ENCODE measurements at regions of chr7 and their contacts with region 1.

Region 1: GRCh38 chr7:82729172-82730030 is 285.8 kb upstream of the CACNA2D1 start:
- DNase-seq: peak in 1 of 2 donors; percentile 42
- ATAC-seq: no peak
- H3K4me3 ChIP-seq: no peak overlapping the region
- H3K4me3 Mint-ChIP-seq: no peak overlapping the region
- H3K27ac ChIP-seq: no peak overlapping the region
- H3K27ac Mint-ChIP-seq: no peak overlapping the region
- H3K4me1 ChIP-seq: no peaks in the 10 kb centered on the region
- H3K4me1 Mint-ChIP-seq: peaks cover 0 to 4% of the 10 kb centered on the region in 2 donors
- H3K27me3 ChIP-seq: no peaks in the 10 kb centered on the region
- H3K27me3 Mint-ChIP-seq: no peaks in the 10 kb centered on the region
- CTCF ChIP-seq: peak; percentile 64

Region 2: DNA sequence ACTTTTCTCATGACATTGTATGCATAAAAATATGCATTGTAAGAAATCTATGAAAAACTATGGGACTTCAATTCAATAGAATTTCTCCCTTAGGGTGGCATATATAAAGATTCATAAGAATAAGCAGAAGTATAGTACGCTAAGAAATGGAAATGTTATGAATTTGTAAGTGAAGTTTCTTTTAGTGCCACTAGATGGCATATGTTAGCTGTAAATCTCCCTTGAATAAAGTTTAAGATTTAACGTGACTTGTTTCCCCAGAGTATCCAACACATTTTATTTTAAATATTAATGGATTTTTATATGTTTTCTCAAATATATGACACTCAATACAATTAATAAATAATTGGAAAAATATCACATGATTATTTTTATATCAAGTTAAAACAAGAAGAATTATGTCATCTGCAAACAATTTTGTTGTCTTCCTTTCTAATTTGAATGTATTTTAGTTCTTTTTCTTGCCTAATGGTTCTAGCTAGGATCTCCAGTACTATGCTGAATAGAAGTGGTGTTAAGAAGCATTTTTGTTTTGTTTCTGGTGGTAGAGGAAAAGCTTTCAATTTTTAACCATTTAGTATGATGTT is 1246.7 kb before region 1 on chr7:
- intact Hi-C with region 1: loop called (anchors 5 kb)
- DNase-seq: peak in 1 of 2 donors; percentile 17
- ATAC-seq: no peak
- H3K4me3 ChIP-seq: no peak overlapping the region
- H3K4me3 Mint-ChIP-seq: no peak overlapping the region
- H3K27ac ChIP-seq: no peak overlapping the region
- H3K27ac Mint-ChIP-seq: no peak overlapping the region
- H3K4me1 ChIP-seq: no peaks in the 10 kb centered on the region
- H3K4me1 Mint-ChIP-seq: no peaks in the 10 kb centered on the region
- H3K27me3 ChIP-seq: no peaks in the 10 kb centered on the region
- H3K27me3 Mint-ChIP-seq: no peaks in the 10 kb centered on the region
- CTCF ChIP-seq: peak; percentile 65

Region 3: DNA sequence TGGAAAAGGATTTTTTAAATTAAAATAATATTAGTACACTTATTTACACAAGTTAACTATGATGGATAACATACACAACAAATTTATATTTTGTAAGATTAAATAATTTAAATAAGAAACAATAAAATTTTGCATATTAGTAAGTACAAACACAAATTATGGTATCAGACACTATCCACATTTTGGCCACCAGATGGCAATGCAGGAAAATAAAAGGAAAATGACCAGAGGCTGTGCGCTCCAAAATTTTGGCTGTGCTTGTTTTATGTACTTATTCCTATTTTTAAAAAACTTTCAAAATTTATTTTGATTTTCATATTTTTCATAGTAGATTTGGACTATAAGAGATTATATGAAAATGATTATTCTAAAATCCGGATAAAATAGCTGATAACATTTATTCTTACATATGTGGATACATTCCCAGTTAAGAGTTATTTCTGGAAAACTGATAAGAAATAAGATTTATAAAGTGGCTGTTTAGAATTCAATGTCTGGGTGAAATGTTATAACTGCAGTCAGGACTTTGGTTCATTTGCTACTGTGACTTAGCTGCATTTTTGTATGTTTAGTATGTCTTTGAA is 684.8 kb before region 1 on chr7:
- intact Hi-C with region 1: loop called (anchors 5 kb)
- DNase-seq: peak in 1 of 2 donors; percentile 32
- ATAC-seq: no peak
- H3K4me3 ChIP-seq: no peak overlapping the region
- H3K4me3 Mint-ChIP-seq: no peak overlapping the region
- H3K27ac ChIP-seq: no peak overlapping the region
- H3K27ac Mint-ChIP-seq: no peak overlapping the region
- H3K4me1 ChIP-seq: no peaks in the 10 kb centered on the region
- H3K4me1 Mint-ChIP-seq: no peaks in the 10 kb centered on the region
- H3K27me3 ChIP-seq: no peaks in the 10 kb centered on the region
- H3K27me3 Mint-ChIP-seq: no peaks in the 10 kb centered on the region
- CTCF ChIP-seq: no peak

Region 4: DNA sequence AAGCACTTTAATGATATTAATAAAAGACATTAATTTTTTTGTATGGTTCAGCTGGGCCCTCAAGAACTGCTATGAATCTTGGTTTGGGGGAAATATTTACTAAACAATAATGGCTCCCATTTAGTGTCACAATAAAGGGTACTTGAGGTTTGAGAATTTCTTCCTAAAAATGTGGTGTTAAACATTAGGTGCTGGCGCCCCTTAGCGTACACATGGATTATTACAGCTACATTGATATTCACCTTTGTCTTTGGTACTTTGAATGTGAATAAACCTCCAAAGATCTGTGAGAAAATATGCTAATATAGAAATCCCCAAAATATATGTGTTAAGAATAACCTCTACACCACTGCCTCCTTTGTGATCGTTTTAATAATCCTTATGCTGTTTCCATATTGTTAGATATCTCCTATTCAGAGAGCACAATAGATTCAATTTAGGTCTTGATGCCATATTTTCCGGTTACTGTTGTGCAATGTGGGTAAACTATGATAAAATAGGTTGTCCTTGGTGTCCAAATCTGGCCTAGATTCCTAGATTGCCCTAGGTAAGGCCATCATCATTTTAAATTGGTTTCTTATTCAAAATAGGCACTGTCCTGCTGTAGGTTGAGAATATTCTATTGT is 124.0 kb before region 1 on chr7:
- intact Hi-C with region 1: loop called (anchors 10 kb)
- DNase-seq: peak in 1 of 2 donors; percentile 25
- ATAC-seq: no peak
- H3K4me3 ChIP-seq: no peak overlapping the region
- H3K4me3 Mint-ChIP-seq: no peak overlapping the region
- H3K27ac ChIP-seq: no peak overlapping the region
- H3K27ac Mint-ChIP-seq: no peak overlapping the region
- H3K4me1 ChIP-seq: no peaks in the 10 kb centered on the region
- H3K4me1 Mint-ChIP-seq: no peaks in the 10 kb centered on the region
- H3K27me3 ChIP-seq: no peaks in the 10 kb centered on the region
- H3K27me3 Mint-ChIP-seq: no peaks in the 10 kb centered on the region
- CTCF ChIP-seq: peak; percentile 51

Region 5: DNA sequence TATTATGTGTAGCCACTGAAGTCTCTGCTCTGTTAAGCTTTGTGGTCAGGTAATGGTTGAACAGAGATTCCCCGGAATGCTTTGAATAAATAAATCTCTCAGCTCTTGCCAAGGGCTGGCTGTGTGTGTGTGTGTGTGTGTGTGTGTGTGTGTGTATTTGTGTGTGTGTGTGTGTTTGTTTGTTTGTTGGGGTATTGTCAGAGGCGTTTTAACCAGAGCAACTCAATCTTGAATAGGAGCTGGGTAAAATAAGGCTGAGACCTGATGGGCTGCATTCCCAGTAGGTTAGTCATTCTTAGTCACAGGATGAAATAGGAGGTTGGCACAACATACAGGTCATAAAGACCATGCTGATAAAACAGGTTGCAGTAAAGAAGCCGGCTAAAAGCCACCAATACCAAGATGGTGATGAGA is 29.6 kb before region 1 on chr7:
- intact Hi-C with region 1: no loop called
- DNase-seq: no peak
- ATAC-seq: no peak
- H3K4me3 ChIP-seq: no peak overlapping the region
- H3K4me3 Mint-ChIP-seq: no peak overlapping the region
- H3K27ac ChIP-seq: no peak overlapping the region
- H3K27ac Mint-ChIP-seq: no peak overlapping the region
- H3K4me1 ChIP-seq: no peaks in the 10 kb centered on the region
- H3K4me1 Mint-ChIP-seq: no peaks in the 10 kb centered on the region
- H3K27me3 ChIP-seq: no peaks in the 10 kb centered on the region
- H3K27me3 Mint-ChIP-seq: no peaks in the 10 kb centered on the region
- CTCF ChIP-seq: no peak

Measured in natural killer cell (primary cell).